CD4-positive, alpha-beta T cell (primary cell): ENCODE measurements at regions of chr12 and their contacts with region 1.

Region 1: GRCh38 chr12:94101738-94102660 is 46.4 kb upstream of the PLXNC1 start:
- DNase-seq: peak; percentile 73 to 92 (median 79)
- ATAC-seq: peak; percentile 90
- H3K4me3 ChIP-seq: peak overlapping the region; percentile 86
- H3K4me3 Mint-ChIP-seq: peak overlapping the region; percentile 90
- H3K27ac ChIP-seq: peak overlapping the region in 1 of 2 donors; percentile 29
- H3K27ac Mint-ChIP-seq: peak overlapping the region; percentile 43
- H3K4me1 ChIP-seq: peaks cover 19% of the 10 kb centered on the region
- H3K4me1 Mint-ChIP-seq: peaks cover 5% of the 10 kb centered on the region
- H3K27me3 ChIP-seq: no peaks in the 10 kb centered on the region
- H3K27me3 Mint-ChIP-seq: peaks cover 15% of the 10 kb centered on the region
- CTCF ChIP-seq: peak; percentile 70

Region 2: GRCh38 chr12:93098077-93098476 is 1003.9 kb before region 1 on chr12:
- CTCF ChIA-PET with region 1: interaction called, 3 read pairs
- POLR2A ChIA-PET with region 1: no interaction called
- intact Hi-C with region 1: loop called in 1 of 2 experiments (anchors 10 kb)
- DNase-seq: peak; percentile 32 to 81 (median 60)
- ATAC-seq: peak; percentile 84
- H3K4me3 ChIP-seq: no peak overlapping the region
- H3K4me3 Mint-ChIP-seq: no peak overlapping the region
- H3K27ac ChIP-seq: no peak overlapping the region
- H3K27ac Mint-ChIP-seq: no peak overlapping the region
- H3K4me1 ChIP-seq: peaks cover 3% of the 10 kb centered on the region
- H3K4me1 Mint-ChIP-seq: peaks cover 5% of the 10 kb centered on the region
- H3K27me3 ChIP-seq: no peaks in the 10 kb centered on the region
- H3K27me3 Mint-ChIP-seq: peaks cover 6% of the 10 kb centered on the region
- CTCF ChIP-seq: peak; percentile 61

Region 3: GRCh38 chr12:93449277-93449676 is 652.7 kb before region 1 on chr12:
- CTCF ChIA-PET with region 1: no interaction called
- POLR2A ChIA-PET with region 1: no interaction called
- intact Hi-C with region 1: loop called in 1 of 2 experiments (anchors 5 kb)
- DNase-seq: no peak
- ATAC-seq: peak; percentile 14
- H3K4me3 ChIP-seq: no peak overlapping the region
- H3K4me3 Mint-ChIP-seq: peak overlapping the region; percentile 65
- H3K27ac ChIP-seq: no peak overlapping the region
- H3K27ac Mint-ChIP-seq: peak overlapping the region; percentile 91
- H3K4me1 ChIP-seq: peaks cover 19% of the 10 kb centered on the region
- H3K4me1 Mint-ChIP-seq: peaks cover 24% of the 10 kb centered on the region
- H3K27me3 ChIP-seq: no peaks in the 10 kb centered on the region
- H3K27me3 Mint-ChIP-seq: no peaks in the 10 kb centered on the region
- CTCF ChIP-seq: no peak

Region 4: GRCh38 chr12:93502802-93503623 is 599.0 kb before region 1 on chr12:
- CTCF ChIA-PET with region 1: interaction called, 116 read pairs
- POLR2A ChIA-PET with region 1: interaction called, 37 read pairs
- intact Hi-C with region 1: loop called (anchors 1 kb)
- DNase-seq: peak; percentile 36 to 79 (median 59)
- ATAC-seq: peak; percentile 29
- H3K4me3 ChIP-seq: no peak overlapping the region
- H3K4me3 Mint-ChIP-seq: no peak overlapping the region
- H3K27ac ChIP-seq: no peak overlapping the region
- H3K27ac Mint-ChIP-seq: no peak overlapping the region
- H3K4me1 ChIP-seq: no peaks in the 10 kb centered on the region
- H3K4me1 Mint-ChIP-seq: no peaks in the 10 kb centered on the region
- H3K27me3 ChIP-seq: no peaks in the 10 kb centered on the region
- H3K27me3 Mint-ChIP-seq: no peaks in the 10 kb centered on the region
- CTCF ChIP-seq: peak; percentile 91

Region 5: DNA sequence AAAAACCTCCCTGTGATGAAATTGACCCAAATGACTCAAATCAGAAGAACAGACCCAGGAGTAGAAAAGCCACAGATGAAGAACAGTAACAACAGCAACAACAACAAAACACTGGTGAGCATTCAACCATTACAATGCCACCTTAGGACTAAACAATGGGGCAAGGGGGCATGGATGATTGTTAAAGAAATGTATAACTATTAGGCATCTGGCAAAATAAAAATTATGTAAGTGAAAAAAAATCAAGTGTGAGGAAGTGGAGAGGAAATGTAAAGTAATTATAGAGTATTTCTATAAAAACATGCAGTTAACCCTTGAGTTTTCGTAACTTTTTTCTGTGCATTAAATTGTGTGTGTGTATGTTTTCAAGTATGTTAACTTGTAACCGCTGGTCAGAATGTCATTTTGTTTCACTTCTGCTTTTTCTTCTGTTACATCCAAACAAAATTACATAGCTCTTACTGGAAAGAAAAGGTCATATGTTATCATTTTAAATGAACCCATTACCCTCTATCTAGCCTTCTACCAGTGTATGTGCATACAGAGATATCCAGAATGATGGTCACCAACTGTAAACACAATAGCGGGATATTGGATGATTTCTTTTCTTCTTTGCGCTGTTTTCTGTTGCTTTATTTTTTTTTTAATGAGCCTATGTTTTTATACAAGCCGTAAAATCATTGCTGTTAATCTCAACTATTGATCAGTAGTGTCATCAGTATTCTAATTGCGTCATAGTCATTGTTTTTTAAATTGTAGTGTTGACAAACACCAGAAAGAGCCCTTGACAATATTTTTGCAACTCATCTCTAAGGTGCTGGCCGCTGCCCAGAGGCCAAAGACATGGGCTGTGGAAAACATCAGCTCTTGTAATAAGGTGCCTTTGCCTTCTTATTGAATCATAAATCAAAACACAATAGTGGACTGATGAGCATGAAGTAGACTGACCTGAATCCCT is 254.2 kb before region 1 on chr12:
- CTCF ChIA-PET with region 1: no interaction called
- POLR2A ChIA-PET with region 1: no interaction called
- intact Hi-C with region 1: no loop called
- DNase-seq: peak in 3 of 14 experiments; percentile 22 to 30 (median 24)
- ATAC-seq: no peak
- H3K4me3 ChIP-seq: no peak overlapping the region
- H3K4me3 Mint-ChIP-seq: no peak overlapping the region
- H3K27ac ChIP-seq: no peak overlapping the region
- H3K27ac Mint-ChIP-seq: no peak overlapping the region
- H3K4me1 ChIP-seq: peaks cover 18% of the 10 kb centered on the region
- H3K4me1 Mint-ChIP-seq: peaks cover 27% of the 10 kb centered on the region
- H3K27me3 ChIP-seq: no peaks in the 10 kb centered on the region
- H3K27me3 Mint-ChIP-seq: no peaks in the 10 kb centered on the region
- CTCF ChIP-seq: no peak

Region 6: DNA sequence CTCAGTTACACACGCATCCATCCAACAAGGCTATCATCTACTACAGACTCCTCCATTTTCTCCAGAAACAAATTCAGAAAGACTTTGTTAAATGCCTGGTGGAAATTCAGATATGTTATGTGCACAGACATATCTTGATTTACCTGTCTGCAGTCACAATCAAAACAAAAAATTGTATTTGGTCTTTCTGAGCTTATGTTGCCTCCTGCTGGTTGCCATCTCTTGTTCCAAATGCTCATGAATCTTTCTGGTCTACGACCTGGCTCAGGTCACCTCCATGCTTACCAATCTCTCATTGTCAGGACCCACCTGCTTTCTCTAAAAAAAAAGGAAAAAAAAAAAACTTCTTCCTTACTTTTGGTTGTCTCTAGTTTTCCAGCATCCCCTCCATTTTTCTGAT is 122.8 kb before region 1 on chr12:
- CTCF ChIA-PET with region 1: interaction called, 4 read pairs
- POLR2A ChIA-PET with region 1: interaction called, 4 read pairs
- intact Hi-C with region 1: loop called in 1 of 2 experiments (anchors 5 kb)
- DNase-seq: peak in 7 of 14 experiments; percentile 3 to 56 (median 32)
- ATAC-seq: no peak
- H3K4me3 ChIP-seq: no peak overlapping the region
- H3K4me3 Mint-ChIP-seq: no peak overlapping the region
- H3K27ac ChIP-seq: no peak overlapping the region
- H3K27ac Mint-ChIP-seq: no peak overlapping the region
- H3K4me1 ChIP-seq: no peaks in the 10 kb centered on the region
- H3K4me1 Mint-ChIP-seq: peaks cover 21% of the 10 kb centered on the region
- H3K27me3 ChIP-seq: no peaks in the 10 kb centered on the region
- H3K27me3 Mint-ChIP-seq: no peaks in the 10 kb centered on the region
- CTCF ChIP-seq: peak; percentile 13